PC-9 (cell line): ENCODE measurements at regions of chr17 and their contacts with region 1.

Region 1: DNA sequence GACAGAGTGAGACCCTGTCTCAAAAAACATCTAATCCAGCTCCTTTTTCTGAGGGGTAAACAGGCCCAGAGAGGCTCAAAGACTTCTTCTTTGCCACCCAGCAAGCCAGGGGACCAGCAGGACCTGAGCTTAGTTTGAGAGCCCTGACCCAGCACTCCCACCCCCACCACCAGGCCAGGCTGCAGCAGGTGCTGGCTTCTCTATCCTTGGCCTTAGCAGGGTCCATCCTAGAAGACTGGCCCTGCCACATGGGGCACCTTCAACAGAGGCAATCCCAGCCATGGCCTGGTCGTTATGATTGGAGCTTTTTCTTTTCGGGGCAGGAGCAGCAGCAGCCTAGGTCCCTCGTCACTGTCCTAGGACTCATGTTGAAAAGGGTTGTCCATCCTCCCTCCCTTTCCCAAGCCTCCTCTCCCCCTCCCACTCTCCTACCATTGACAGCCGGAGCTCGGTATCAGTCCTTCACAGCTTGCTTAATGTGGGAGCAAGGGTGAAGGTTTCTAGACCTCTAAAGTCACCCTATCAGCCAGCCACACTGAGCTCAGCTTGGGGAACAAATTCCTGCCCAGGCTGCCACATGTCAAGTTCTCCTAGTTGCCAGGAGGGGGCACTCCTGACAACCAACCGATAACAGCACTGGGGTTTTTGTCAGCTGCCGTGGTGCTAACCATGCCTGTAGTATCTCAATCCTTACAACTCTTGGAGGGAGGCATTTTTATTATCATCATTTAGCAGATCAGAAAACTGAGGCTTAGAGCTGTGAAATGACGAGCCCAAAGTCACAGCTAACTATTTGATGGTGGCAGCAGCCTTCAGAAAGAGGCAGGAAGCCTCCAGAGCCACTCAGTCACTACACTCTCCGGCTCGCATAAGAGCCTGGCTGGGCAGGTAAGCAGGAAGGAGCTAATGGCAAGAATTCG is 11.2 kb downstream of the MRPL27 start:
- DNase-seq: peak; percentile 46 to 56
- H3K4me3 ChIP-seq: no peak overlapping the region
- H3K27ac ChIP-seq: no peak overlapping the region
- H3K4me1 ChIP-seq: no peaks in the 10 kb centered on the region
- H3K27me3 ChIP-seq: no peaks in the 10 kb centered on the region
- CTCF ChIP-seq: peak; percentile 92

Region 2: GRCh38 chr17:49899191-49899485 is 462.7 kb before region 1 on chr17:
- CTCF ChIA-PET with region 1: no interaction called
- POLR2A ChIA-PET with region 1: no interaction called
- intact Hi-C with region 1: no loop called
- DNase-seq: no peak
- H3K4me3 ChIP-seq: no peak overlapping the region
- H3K27ac ChIP-seq: no peak overlapping the region
- H3K4me1 ChIP-seq: peaks cover 90% of the 10 kb centered on the region
- H3K27me3 ChIP-seq: no peaks in the 10 kb centered on the region
- CTCF ChIP-seq: peak; percentile 61

Region 3: DNA sequence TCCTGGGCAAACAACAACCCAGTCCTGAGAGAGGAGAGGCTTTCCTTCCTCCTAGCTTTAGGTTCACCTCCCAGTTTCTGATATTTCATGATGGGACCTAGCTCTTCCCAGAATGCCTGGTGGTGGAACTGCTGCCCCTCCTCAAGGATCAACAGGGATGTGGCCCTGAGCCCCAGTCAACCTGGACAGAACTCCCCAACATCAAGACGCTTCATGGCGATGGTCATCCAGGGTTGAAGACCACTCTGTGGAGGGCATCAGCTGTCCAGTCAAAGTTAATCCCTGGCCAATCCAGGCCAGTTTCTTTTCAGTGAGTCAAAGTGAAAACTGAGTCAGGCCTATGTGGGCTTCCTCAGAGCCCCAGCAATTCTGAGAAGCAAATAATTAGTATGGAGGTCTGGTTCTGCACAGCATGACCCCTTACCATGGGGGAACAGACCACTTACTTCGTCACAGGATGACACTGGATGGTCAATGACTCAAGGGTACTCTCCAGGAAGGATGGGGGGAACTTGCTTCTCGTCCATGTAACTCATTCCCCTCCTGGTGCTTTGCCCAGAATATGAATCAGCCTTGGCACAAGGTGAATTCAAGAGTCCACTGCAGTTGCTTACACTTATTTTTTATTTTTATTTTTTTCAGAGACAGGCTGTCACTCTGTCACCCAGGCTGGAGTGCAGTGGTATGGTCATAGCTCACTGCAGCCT is 30.6 kb before region 1 on chr17:
- CTCF ChIA-PET with region 1: no interaction called
- POLR2A ChIA-PET with region 1: no interaction called
- intact Hi-C with region 1: no loop called
- DNase-seq: no peak
- H3K4me3 ChIP-seq: no peak overlapping the region
- H3K27ac ChIP-seq: no peak overlapping the region
- H3K4me1 ChIP-seq: no peaks in the 10 kb centered on the region
- H3K27me3 ChIP-seq: no peaks in the 10 kb centered on the region
- CTCF ChIP-seq: no peak

Region 4: DNA sequence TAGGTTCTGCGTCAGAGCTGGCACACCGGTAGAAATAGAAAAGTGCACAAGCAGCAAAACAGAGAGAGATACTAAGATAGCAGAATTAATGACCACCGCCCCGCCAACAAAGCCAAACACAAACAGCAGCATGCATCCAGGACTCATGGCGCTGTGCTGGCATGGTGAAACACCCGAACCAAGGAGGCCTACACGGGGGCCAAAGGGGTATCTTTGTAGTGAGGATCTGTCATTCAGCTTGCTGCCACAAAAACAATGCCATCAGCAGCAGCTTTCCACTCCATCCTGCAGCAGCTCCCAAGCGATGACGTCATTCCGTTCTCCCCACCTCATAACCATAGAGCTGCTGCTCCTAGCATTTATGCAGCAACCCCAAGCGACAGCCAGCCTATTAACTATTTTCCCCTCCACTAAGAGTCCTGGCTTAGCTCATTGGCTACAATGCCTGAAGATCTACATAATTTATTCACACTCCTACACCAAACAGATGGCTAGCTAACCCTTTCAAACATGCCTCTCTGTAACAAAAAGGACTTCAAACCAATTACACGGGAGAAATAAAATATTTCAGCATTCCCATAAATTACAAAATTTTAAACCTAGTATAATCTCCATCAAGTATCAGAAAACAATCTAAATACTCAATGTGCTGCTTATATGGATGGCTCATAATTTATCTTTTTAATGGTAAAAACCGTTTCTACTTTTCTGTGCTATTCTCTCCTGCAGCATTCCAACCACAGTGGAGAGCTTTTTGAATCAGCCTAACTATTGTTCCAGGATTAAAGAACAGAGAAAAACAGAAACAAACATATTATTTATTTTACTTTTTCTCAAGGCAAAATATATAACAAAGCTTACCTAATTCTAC is 684.9 kb after region 1 on chr17:
- CTCF ChIA-PET with region 1: interaction called, 10 read pairs
- POLR2A ChIA-PET with region 1: no interaction called
- intact Hi-C with region 1: no loop called
- DNase-seq: no peak
- H3K4me3 ChIP-seq: no peak overlapping the region
- H3K27ac ChIP-seq: no peak overlapping the region
- H3K4me1 ChIP-seq: no peaks in the 10 kb centered on the region
- H3K27me3 ChIP-seq: no peaks in the 10 kb centered on the region
- CTCF ChIP-seq: no peak